ENCODE measurements at regions of chr12 and their contacts with region 1.

Region 1: GRCh38 chr12:55996715-55997534 is at the start of gene SUOX:
- DNase-seq: peak in 3 of 9 donors; percentile 8 to 58 (median 31)
- ATAC-seq: peak; percentile 93
- H3K4me3 ChIP-seq: no peak within 1 kb of the TSS
- H3K4me3 Mint-ChIP-seq: peak within 1 kb of the TSS; percentile 49 to 87 (median 62)
- H3K27ac ChIP-seq: no peak within 1 kb of the TSS
- H3K27ac Mint-ChIP-seq: peak within 1 kb of the TSS in 7 of 9 donors; percentile 19 to 78 (median 63)
- H3K4me1 ChIP-seq: peaks cover 0 to 14% of the 10 kb centered on the region in 2 donors
- H3K4me1 Mint-ChIP-seq: peaks cover 8 to 37% (median 16%) of the 10 kb centered on the region in 7 donors
- H3K27me3 ChIP-seq: no peaks in the 10 kb centered on the region
- H3K27me3 Mint-ChIP-seq: peaks cover 0 to 4% (median 0%) of the 10 kb centered on the region in 5 donors
- total RNA-seq, gene SUOX: 1.9 to 10.4 (median 7.1) TPM

Region 2: GRCh38 chr12:55642669-55643068 is 354.3 kb before region 1 on chr12:
- CTCF ChIA-PET with region 1: no interaction called
- POLR2A ChIA-PET with region 1: no interaction called
- intact Hi-C with region 1: no loop called
- DNase-seq: no peak
- ATAC-seq: no peak
- H3K4me3 ChIP-seq: no peak overlapping the region
- H3K4me3 Mint-ChIP-seq: no peak overlapping the region
- H3K27ac ChIP-seq: no peak overlapping the region
- H3K27ac Mint-ChIP-seq: peak overlapping the region in 1 of 9 donors; percentile 16
- H3K4me1 ChIP-seq: peaks cover 0 to 4% of the 10 kb centered on the region in 2 donors
- H3K4me1 Mint-ChIP-seq: peaks cover 21 to 30% (median 24%) of the 10 kb centered on the region in 7 donors
- H3K27me3 ChIP-seq: no peaks in the 10 kb centered on the region
- H3K27me3 Mint-ChIP-seq: peaks cover 0 to 5% (median 2%) of the 10 kb centered on the region in 5 donors

Region 3: DNA sequence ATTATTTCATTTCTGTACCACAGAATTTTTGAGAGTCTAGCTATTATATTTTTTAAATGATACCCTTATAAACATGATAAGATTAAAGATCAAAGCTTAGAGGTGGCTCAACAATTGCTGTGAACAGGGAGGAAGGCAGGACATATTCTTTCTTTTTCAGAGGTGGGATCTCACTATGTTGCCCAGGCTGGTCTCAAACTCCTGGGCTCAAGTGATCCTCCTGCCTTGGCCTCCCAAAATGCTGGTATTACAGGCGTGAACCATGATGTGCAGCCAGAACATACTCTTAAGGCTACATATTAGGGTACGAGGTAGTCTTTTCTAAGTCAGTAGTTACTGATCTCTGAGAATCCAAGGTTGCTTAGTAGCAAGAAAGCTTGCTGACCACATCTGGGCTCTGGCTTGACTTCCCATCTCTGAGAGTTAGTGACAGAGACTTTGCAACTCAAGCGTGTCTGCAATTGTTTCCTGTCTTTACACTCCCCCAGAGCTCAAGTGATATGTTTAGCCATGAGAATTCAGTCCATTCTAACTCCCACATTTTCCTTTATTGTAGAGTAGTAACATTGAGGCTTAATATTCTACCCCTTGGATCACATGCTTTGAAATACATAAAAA is 14.5 kb before region 1 on chr12:
- CTCF ChIA-PET with region 1: interaction called, 27 read pairs
- POLR2A ChIA-PET with region 1: interaction called, 6 read pairs
- intact Hi-C with region 1: no loop called
- DNase-seq: no peak
- ATAC-seq: no peak
- H3K4me3 ChIP-seq: no peak overlapping the region
- H3K4me3 Mint-ChIP-seq: no peak overlapping the region
- H3K27ac ChIP-seq: no peak overlapping the region
- H3K27ac Mint-ChIP-seq: peak overlapping the region in 1 of 9 donors; percentile 84
- H3K4me1 ChIP-seq: no peaks in the 10 kb centered on the region
- H3K4me1 Mint-ChIP-seq: peaks cover 15 to 42% (median 32%) of the 10 kb centered on the region in 7 donors
- H3K27me3 ChIP-seq: no peaks in the 10 kb centered on the region
- H3K27me3 Mint-ChIP-seq: no peaks in the 10 kb centered on the region

Region 4: GRCh38 chr12:56020423-56021184 is 23.7 kb after region 1 on chr12 and contains the start of gene IKZF4:
- CTCF ChIA-PET with region 1: interaction called, 6 read pairs
- POLR2A ChIA-PET with region 1: interaction called, 7 read pairs
- intact Hi-C with region 1: loop called in 1 of 2 experiments (anchors 2 kb)
- DNase-seq: peak in 1 of 9 donors; percentile 36
- ATAC-seq: peak; percentile 55
- H3K4me3 ChIP-seq: peak within 1 kb of the TSS; percentile 41
- H3K4me3 Mint-ChIP-seq: peak within 1 kb of the TSS; percentile 80 to 97 (median 88)
- H3K27ac ChIP-seq: peak within 1 kb of the TSS; percentile 62
- H3K27ac Mint-ChIP-seq: peak within 1 kb of the TSS; percentile 73 to 97 (median 93)
- H3K4me1 ChIP-seq: peaks cover 0 to 16% of the 10 kb centered on the region in 2 donors
- H3K4me1 Mint-ChIP-seq: peaks cover 7 to 58% (median 24%) of the 10 kb centered on the region in 7 donors
- H3K27me3 ChIP-seq: no peaks in the 10 kb centered on the region
- H3K27me3 Mint-ChIP-seq: no peaks in the 10 kb centered on the region
- total RNA-seq, gene IKZF4: 3.6 to 37.8 (median 5.3) TPM

Region 5: DNA sequence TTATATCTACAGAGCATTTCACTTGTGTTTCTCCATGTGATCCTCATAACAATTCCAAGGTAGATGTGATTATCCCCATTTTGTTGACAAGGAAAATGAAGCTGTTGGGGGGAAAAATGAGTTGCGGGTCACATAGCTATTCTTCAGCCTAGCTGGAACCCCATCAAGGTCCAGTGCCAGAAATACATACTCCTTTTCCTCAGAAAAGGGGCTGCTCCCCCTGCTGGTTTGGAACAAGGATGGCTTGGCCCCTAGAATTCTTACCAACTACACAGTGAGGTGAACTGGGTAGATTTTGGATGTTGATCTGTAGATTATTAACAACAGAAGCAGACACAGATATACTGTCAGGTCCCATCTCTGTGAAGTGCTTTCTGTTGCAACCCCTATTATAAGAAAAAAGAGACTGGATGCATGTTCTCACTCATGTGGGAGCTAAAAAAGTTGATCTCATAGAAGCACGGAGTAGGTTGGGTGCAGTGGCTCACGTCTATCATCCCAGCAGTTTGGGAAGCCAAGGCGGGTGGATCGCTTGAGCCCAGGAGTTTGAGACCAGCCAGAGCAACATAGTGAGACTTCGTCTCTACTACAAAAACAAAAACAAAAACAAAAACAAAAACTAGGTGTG is 32.9 kb after region 1 on chr12:
- CTCF ChIA-PET with region 1: interaction called, 54 read pairs
- POLR2A ChIA-PET with region 1: interaction called, 7 read pairs
- intact Hi-C with region 1: loop called (anchors 1 kb)
- DNase-seq: peak in 8 of 9 donors; percentile 24 to 59 (median 46)
- ATAC-seq: peak; percentile 71
- H3K4me3 ChIP-seq: no peak overlapping the region
- H3K4me3 Mint-ChIP-seq: peak overlapping the region in 1 of 10 donors; percentile 1
- H3K27ac ChIP-seq: no peak overlapping the region
- H3K27ac Mint-ChIP-seq: peak overlapping the region in 4 of 9 donors; percentile 3 to 74 (median 32)
- H3K4me1 ChIP-seq: peaks cover 0 to 7% of the 10 kb centered on the region in 2 donors
- H3K4me1 Mint-ChIP-seq: peaks cover 9 to 54% (median 20%) of the 10 kb centered on the region in 7 donors
- H3K27me3 ChIP-seq: no peaks in the 10 kb centered on the region
- H3K27me3 Mint-ChIP-seq: no peaks in the 10 kb centered on the region

Region 6: DNA sequence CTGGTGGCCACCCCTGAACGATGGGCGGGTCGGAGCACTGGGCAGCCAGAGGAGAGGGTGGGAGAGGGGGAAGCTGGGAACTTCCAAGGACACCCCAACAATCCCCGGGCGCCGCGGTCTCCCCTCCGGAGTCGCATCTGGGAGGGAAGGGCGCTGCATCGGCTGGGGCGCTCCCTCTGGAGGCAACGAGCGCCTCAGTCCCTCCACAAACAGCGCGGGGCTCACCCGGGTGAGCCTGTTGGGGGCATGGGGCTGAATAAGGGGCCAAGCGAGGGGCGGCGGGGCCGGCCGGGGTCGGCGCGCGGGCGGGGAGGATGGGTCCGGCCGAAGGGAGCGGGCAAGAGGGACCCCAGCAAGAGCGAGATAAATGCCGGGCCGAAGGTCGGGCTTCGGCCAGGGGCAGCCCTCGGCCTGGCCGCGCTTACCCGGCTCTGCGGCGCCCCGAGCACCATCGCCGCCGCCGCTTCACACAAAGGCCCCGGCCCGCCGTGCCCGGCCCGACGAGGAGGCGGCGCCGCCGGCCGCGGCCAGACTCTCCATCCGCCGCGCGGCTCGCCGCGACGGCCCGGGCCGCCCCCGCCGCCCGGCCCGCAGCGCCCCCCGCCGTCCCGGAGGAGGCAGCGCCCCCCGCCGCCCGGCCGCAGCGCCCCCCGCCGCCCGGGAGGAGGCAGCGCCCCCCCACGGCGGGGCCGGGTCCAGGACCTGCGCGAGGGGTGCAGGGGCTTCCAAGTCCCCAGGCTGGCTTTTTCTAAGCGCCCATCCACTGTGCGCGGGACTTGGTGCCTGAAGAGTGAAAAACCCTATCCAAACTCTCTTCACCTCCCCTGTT is 1009.3 kb after region 1 on chr12 and contains the start of gene ZBTB39:
- CTCF ChIA-PET with region 1: no interaction called
- POLR2A ChIA-PET with region 1: no interaction called
- intact Hi-C with region 1: no loop called
- DNase-seq: peak; percentile 51 to 84 (median 62)
- ATAC-seq: peak; percentile 91
- H3K4me3 ChIP-seq: peak within 1 kb of the TSS; percentile 63
- H3K4me3 Mint-ChIP-seq: peak within 1 kb of the TSS; percentile 90 to 94 (median 92)
- H3K27ac ChIP-seq: peak within 1 kb of the TSS; percentile 82
- H3K27ac Mint-ChIP-seq: peak within 1 kb of the TSS; percentile 92 to 95 (median 95)
- H3K4me1 ChIP-seq: peaks cover 20 to 46% of the 10 kb centered on the region in 2 donors
- H3K4me1 Mint-ChIP-seq: peaks cover 36 to 80% (median 76%) of the 10 kb centered on the region in 7 donors
- H3K27me3 ChIP-seq: no peaks in the 10 kb centered on the region
- H3K27me3 Mint-ChIP-seq: no peaks in the 10 kb centered on the region
- total RNA-seq, gene ZBTB39: 5.8 to 12.9 (median 10.7) TPM

Region 7: DNA sequence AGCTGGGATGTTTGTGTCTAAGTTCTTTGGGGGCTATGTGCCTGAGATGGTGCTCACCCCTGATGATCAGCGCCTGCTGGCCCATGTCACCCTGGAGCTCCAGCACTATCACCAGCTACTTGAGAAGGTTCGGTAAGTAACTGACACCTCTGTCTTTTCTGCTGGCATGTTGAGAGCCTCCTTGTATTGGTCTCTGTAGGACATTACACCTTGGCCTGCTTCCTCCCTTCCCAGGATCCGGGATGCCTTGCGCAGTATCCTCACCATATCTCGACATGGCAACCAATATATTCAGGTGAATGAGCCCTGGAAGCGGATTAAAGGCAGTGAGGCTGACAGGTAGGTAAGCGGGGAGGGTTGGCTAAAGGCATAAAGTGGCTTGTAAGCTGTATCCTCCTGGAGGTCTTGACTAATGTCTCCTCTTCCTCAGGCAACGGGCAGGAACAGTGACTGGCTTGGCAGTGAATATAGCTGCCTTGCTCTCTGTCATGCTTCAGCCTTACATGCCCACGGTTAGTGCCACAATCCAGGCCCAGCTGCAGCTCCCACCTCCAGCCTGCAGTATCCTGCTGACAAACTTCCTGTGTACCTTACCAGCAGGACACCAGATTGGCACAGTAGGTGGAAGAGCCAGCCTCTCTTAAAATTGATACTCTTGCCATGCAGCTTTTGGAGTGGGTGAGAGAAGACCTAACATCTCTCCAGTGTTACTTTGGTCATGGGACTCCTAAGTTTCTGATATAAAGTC is 1518.0 kb after region 1 on chr12:
- CTCF ChIA-PET with region 1: no interaction called
- POLR2A ChIA-PET with region 1: no interaction called
- intact Hi-C with region 1: no loop called
- DNase-seq: no peak
- ATAC-seq: peak; percentile 7
- H3K4me3 ChIP-seq: no peak overlapping the region
- H3K4me3 Mint-ChIP-seq: no peak overlapping the region
- H3K27ac ChIP-seq: no peak overlapping the region
- H3K27ac Mint-ChIP-seq: peak overlapping the region in 6 of 9 donors; percentile 4 to 85 (median 61)
- H3K4me1 ChIP-seq: peaks cover 9 to 15% of the 10 kb centered on the region in 2 donors
- H3K4me1 Mint-ChIP-seq: peaks cover 22 to 41% (median 24%) of the 10 kb centered on the region in 7 donors
- H3K27me3 ChIP-seq: no peaks in the 10 kb centered on the region
- H3K27me3 Mint-ChIP-seq: no peaks in the 10 kb centered on the region